ENCODE measurements at regions of chr20 and their contacts with region 1.

Region 1: DNA sequence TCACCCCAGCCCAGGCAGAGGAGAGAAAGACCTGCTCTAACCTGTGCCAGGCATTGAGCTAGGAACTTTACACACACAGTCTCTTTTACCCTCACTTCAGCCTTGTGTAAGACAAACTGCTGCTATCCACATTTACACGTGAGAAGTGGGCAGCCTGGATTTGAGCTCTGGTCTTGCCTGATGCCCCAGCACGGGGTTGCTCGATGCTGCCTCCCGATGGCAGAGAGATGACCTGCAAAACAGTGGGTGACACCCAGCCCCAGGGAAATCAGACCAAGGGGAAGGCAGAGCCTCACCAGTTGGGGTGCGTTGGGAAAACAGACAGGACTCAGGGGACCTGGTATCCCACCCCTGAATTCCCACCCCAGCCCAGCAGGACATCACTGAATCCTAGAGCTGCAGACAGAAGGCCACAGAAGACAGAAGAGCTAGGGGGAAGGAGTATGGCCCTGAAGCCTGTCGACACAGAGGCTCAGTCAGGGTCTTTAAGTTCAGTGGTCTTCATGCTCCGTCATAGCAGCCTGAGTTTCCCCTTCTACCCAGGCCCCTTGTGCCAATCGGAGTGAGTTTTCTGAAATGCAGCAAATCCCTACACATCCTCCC is 990 bp downstream of the BPI start:
- DNase-seq: peak in 1 of 2 experiments; percentile 51
- H3K4me3 ChIP-seq: no peak overlapping the region
- H3K27ac ChIP-seq: no peak overlapping the region
- H3K4me1 ChIP-seq: peaks cover 9% of the 10 kb centered on the region
- H3K27me3 ChIP-seq: peaks cover 20% of the 10 kb centered on the region; the same call in 1 of the 2 replicates
- CTCF ChIP-seq: peak; percentile 70

Region 2: GRCh38 chr20:38109591-38110524 is 195.1 kb before region 1 on chr20:
- CTCF ChIA-PET with region 1: interaction called, 13 read pairs
- POLR2A ChIA-PET with region 1: no interaction called
- intact Hi-C with region 1: no loop called
- DNase-seq: peak; percentile 87 to 99
- H3K4me3 ChIP-seq: no peak overlapping the region; the same call in 1 of the 2 replicates
- H3K27ac ChIP-seq: peak overlapping the region; percentile 92
- H3K4me1 ChIP-seq: peaks cover 58% of the 10 kb centered on the region
- H3K27me3 ChIP-seq: no peaks in the 10 kb centered on the region
- CTCF ChIP-seq: no peak

Region 3: DNA sequence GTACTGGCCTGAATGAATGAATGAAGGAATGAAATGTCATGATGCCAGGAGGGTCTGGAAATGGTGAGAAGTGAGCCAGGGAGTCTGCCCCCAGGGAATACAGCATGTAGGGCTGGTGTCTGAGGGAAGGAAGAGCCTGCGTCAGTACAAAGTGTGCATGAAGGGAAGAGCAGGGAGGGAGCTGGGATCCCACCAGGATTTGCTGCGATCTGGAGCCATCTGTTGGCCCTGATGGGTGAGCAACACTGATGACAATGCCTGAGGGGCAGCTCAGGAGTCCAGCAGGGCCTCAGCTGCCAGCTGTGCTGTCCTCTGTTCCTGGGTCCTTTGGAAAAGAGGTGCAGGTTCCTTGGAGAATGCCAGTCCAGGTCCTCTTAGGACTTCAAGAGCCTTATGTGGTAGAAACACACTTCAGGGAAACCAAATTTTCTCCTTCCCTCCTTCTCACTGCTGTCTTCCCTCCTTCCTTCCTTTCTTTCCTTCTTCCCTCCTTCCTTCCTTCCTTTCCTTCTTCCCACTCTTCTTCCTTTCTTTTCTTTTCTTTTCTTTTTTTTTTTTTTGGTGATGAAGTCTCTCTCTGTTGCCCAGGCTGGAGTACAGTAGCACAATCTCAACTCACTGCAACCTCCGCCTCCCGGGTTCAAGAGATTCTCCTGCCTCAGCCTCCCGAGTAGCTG is 10.5 kb after region 1 on chr20:
- CTCF ChIA-PET with region 1: no interaction called
- POLR2A ChIA-PET with region 1: no interaction called
- intact Hi-C with region 1: no loop called
- DNase-seq: no peak
- H3K4me3 ChIP-seq: no peak overlapping the region
- H3K27ac ChIP-seq: no peak overlapping the region
- H3K4me1 ChIP-seq: no peaks in the 10 kb centered on the region
- H3K27me3 ChIP-seq: peaks cover 44% of the 10 kb centered on the region
- CTCF ChIP-seq: no peak

Region 4: GRCh38 chr20:38330638-38331037 is 25.7 kb after region 1 on chr20:
- CTCF ChIA-PET with region 1: no interaction called
- POLR2A ChIA-PET with region 1: no interaction called
- intact Hi-C with region 1: no loop called
- DNase-seq: no peak
- H3K4me3 ChIP-seq: no peak overlapping the region
- H3K27ac ChIP-seq: no peak overlapping the region
- H3K4me1 ChIP-seq: no peaks in the 10 kb centered on the region
- H3K27me3 ChIP-seq: peaks cover 70% of the 10 kb centered on the region
- CTCF ChIP-seq: no peak

Region 5: DNA sequence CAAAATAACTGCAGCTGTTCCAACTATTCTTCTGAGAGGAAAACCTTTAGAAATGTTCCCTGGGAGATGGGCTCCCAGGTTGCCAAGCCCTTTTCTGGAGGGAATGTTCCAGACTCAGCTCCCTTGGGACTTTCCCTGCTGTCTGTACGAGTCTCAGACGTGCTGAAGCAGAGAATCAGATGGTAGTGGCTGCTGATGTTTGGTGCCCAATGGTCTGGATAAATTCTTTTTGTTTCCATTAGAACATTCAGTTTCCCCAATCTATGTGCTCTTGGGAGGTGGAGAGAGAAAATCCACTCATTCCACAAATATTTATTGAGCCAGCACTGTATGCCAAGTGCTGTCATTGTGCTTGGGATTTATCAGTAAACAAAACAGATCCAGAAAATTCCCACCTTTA is 90.2 kb after region 1 on chr20:
- CTCF ChIA-PET with region 1: no interaction called
- POLR2A ChIA-PET with region 1: interaction called, 11 read pairs
- intact Hi-C with region 1: no loop called
- DNase-seq: no peak
- H3K4me3 ChIP-seq: no peak overlapping the region
- H3K27ac ChIP-seq: no peak overlapping the region
- H3K4me1 ChIP-seq: no peaks in the 10 kb centered on the region
- H3K27me3 ChIP-seq: no peaks in the 10 kb centered on the region
- CTCF ChIP-seq: no peak

Region 6: GRCh38 chr20:38730989-38731737 is 426.2 kb after region 1 on chr20:
- CTCF ChIA-PET with region 1: no interaction called
- POLR2A ChIA-PET with region 1: no interaction called
- intact Hi-C with region 1: no loop called
- DNase-seq: peak in 1 of 2 experiments; percentile 38
- H3K4me3 ChIP-seq: no peak overlapping the region
- H3K27ac ChIP-seq: no peak overlapping the region
- H3K4me1 ChIP-seq: no peaks in the 10 kb centered on the region
- H3K27me3 ChIP-seq: peaks cover 82% of the 10 kb centered on the region
- CTCF ChIP-seq: peak; percentile 96